ENCODE measurements at regions of chr9 and their contacts with region 1.

Region 1: GRCh38 chr9:104177003-104177611 is 83.0 kb downstream of the SMC2 start:
- DNase-seq: no peak
- H3K4me3 Mint-ChIP-seq: no peak overlapping the region
- H3K27ac Mint-ChIP-seq: no peak overlapping the region
- H3K4me1 Mint-ChIP-seq: no peaks in the 10 kb centered on the region
- H3K27me3 Mint-ChIP-seq: peaks cover 4% of the 10 kb centered on the region

Region 2: GRCh38 chr9:104386425-104387069 is 209.4 kb after region 1 on chr9:
- CTCF ChIA-PET with region 1: interaction called, 4 read pairs
- intact Hi-C with region 1: loop called (anchors 1 kb)
- DNase-seq: no peak
- H3K4me3 Mint-ChIP-seq: no peak overlapping the region
- H3K27ac Mint-ChIP-seq: no peak overlapping the region
- H3K4me1 Mint-ChIP-seq: no peaks in the 10 kb centered on the region
- H3K27me3 Mint-ChIP-seq: no peaks in the 10 kb centered on the region

Measured in activated naive CD4-positive, alpha-beta T cell treated with anti-CD3 and anti-CD28 coated beads for 36 hours (primary cell).